ENCODE measurements at regions of chr3 and their contacts with region 1.

Region 1: GRCh38 chr3:148075763-148076716 is 621.7 kb upstream of the AGTR1 start:
- DNase-seq: peak; percentile 44
- H3K4me3 Mint-ChIP-seq: no peak overlapping the region
- H3K27ac Mint-ChIP-seq: no peak overlapping the region
- H3K4me1 Mint-ChIP-seq: no peaks in the 10 kb centered on the region
- H3K27me3 Mint-ChIP-seq: no peaks in the 10 kb centered on the region
- CTCF ChIP-seq: peak; percentile 74

Region 2: GRCh38 chr3:146640955-146641867 is 1434.8 kb before region 1 on chr3:
- CTCF ChIA-PET with region 1: no interaction called
- intact Hi-C with region 1: loop called (anchors 5 kb)
- DNase-seq: peak; percentile 56
- H3K4me3 Mint-ChIP-seq: no peak overlapping the region
- H3K27ac Mint-ChIP-seq: no peak overlapping the region
- H3K4me1 Mint-ChIP-seq: no peaks in the 10 kb centered on the region
- H3K27me3 Mint-ChIP-seq: no peaks in the 10 kb centered on the region
- CTCF ChIP-seq: peak; percentile 74

Region 3: GRCh38 chr3:147119989-147120388 is 956.1 kb before region 1 on chr3:
- CTCF ChIA-PET with region 1: interaction called, 16 read pairs
- intact Hi-C with region 1: loop called (anchors 1 kb)
- DNase-seq: no peak
- H3K4me3 Mint-ChIP-seq: no peak overlapping the region
- H3K27ac Mint-ChIP-seq: no peak overlapping the region
- H3K4me1 Mint-ChIP-seq: no peaks in the 10 kb centered on the region
- H3K27me3 Mint-ChIP-seq: no peaks in the 10 kb centered on the region
- CTCF ChIP-seq: peak; percentile 47

Region 4: GRCh38 chr3:147246906-147247305 is 829.1 kb before region 1 on chr3:
- CTCF ChIA-PET with region 1: no interaction called
- intact Hi-C with region 1: no loop called
- DNase-seq: no peak
- H3K4me3 Mint-ChIP-seq: no peak overlapping the region
- H3K27ac Mint-ChIP-seq: no peak overlapping the region
- H3K4me1 Mint-ChIP-seq: no peaks in the 10 kb centered on the region
- H3K27me3 Mint-ChIP-seq: no peaks in the 10 kb centered on the region
- CTCF ChIP-seq: no peak

Region 5: DNA sequence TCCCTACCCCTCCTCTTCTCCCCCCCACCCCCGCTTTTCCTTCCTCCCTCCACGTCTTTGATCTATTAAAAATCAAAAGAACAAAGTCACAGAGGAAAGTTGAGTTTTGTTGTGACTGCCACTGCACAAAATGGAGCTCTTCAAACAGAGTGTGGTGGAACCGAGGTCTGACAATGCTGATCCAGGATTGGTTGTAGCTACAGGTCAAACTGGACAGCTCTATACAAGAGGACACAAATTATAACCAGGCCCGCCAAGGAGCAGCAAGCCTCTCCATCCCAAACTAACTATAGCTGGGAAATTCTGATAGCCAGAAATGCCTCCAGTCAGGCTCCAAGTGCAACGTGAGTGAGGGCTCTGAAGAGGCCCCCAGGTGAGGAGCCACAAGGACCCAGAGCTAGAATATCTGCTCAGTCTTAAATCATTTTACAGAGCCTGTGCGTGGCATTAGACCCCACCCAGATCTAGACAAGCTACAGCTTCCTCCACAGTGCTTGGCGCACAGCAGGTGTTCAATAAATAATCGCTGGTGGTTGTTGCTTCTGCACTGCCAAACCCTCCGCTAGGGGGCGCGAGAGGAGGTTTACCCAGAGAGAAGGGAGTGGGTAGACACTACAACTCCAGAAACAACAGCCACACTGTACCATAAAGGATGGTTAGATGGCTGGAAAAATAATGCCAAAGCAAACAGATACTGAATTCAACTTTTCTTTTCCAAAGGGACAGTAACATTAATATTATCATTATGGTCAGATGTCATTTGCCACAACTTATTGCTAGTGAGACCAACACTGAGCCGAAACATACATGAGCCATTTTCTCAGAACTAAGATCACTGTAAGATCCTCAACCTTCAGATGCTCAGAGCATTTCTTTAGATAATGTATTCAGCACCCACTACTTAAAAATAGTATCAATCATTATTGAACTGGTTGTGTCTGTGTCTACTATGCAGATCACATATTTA is 714.3 kb before region 1 on chr3:
- CTCF ChIA-PET with region 1: no interaction called
- intact Hi-C with region 1: loop called (anchors 5 kb)
- DNase-seq: peak; percentile 78
- H3K4me3 Mint-ChIP-seq: peak overlapping the region; percentile 3
- H3K27ac Mint-ChIP-seq: no peak overlapping the region
- H3K4me1 Mint-ChIP-seq: no peaks in the 10 kb centered on the region
- H3K27me3 Mint-ChIP-seq: no peaks in the 10 kb centered on the region
- CTCF ChIP-seq: peak; percentile 85

Region 6: DNA sequence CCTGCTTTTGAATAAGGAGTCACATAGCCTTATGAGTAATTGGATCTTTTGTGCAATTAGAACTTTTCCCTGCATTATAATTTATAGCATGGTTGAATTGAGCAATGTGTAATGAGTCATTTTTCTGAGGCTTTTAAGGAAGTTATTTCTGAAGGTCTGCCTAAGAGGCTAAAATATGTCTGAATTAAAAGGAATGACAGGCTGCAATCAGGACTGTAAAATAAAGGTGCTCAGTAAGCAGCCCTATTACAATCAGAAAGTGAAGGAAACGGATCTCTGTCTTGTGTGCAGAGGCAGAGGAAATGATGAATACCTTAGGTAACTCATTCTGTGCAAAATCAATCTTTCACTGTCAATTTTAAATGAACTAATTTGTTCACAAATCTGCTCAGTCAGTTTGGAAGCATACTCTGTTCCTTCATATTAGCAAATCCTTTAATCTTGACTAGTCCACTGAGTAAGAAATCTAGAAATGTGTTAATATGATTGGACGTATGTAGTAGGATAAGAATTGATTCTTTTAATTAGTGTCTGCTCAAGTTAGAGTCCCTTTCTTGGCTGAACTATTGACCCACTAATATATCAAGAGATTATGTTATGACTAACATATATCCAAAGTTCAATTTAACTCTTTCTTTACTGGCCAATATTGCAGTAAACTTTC is 376.7 kb before region 1 on chr3:
- CTCF ChIA-PET with region 1: no interaction called
- intact Hi-C with region 1: loop called (anchors 2 kb)
- DNase-seq: peak; percentile 24
- H3K4me3 Mint-ChIP-seq: peak overlapping the region; percentile 27
- H3K27ac Mint-ChIP-seq: peak overlapping the region; percentile 76
- H3K4me1 Mint-ChIP-seq: peaks cover 33% of the 10 kb centered on the region
- H3K27me3 Mint-ChIP-seq: no peaks in the 10 kb centered on the region
- CTCF ChIP-seq: no peak

Region 7: GRCh38 chr3:148092624-148093347 is 16.7 kb after region 1 on chr3:
- CTCF ChIA-PET with region 1: no interaction called
- intact Hi-C with region 1: no loop called
- DNase-seq: no peak
- H3K4me3 Mint-ChIP-seq: no peak overlapping the region
- H3K27ac Mint-ChIP-seq: no peak overlapping the region
- H3K4me1 Mint-ChIP-seq: no peaks in the 10 kb centered on the region
- H3K27me3 Mint-ChIP-seq: no peaks in the 10 kb centered on the region
- CTCF ChIP-seq: no peak

Region 8: DNA sequence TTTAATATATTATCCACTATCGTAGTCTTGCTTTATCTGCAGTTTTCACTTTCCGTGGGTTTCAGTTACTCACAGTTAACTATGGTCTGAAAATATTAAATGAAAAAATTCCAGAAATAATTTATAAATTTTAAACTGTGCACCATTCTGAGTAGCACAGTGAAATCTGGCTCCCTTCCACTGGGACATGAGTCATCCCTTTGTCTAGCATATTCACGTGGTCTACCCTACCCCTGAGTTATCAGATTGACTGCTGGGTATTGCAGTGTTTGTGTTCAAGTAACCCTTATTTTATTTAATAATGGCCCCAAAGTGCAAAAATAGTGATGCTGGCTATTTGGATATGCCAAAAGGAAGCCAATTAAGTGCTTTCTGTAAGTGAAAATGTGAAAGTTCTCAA is 82.2 kb after region 1 on chr3:
- CTCF ChIA-PET with region 1: interaction called, 4 read pairs
- intact Hi-C with region 1: loop called (anchors 5 kb)
- DNase-seq: peak; percentile 78
- H3K4me3 Mint-ChIP-seq: no peak overlapping the region
- H3K27ac Mint-ChIP-seq: no peak overlapping the region
- H3K4me1 Mint-ChIP-seq: no peaks in the 10 kb centered on the region
- H3K27me3 Mint-ChIP-seq: no peaks in the 10 kb centered on the region
- CTCF ChIP-seq: no peak

Measured in Calu3 (cell line).